Activated T-helper 1 cell treated with anti-CD3 and anti-CD28 coated beads, Interleukin-12 subunit alpha, Interleukin-12 subunit beta, Interleukin-2, Interleukin-4 antibody, amounts not matched to agents 30 ng/mL and 10 ng/mL and 1 ng/mL, durations not matched to agents 14 hours and 24 hours and 36 hours (primary cell): ENCODE measurements at regions of chr2 and their contacts with region 1.

Region 1: GRCh38 chr2:239927424-239927981 is 97.6 kb downstream of the NDUFA10 start:
- DNase-seq: peak; percentile 48
- H3K4me3 Mint-ChIP-seq: peak overlapping the region; percentile 53
- H3K27ac Mint-ChIP-seq: peak overlapping the region; percentile 61
- H3K4me1 Mint-ChIP-seq: peaks cover 38% of the 10 kb centered on the region
- H3K27me3 Mint-ChIP-seq: peaks cover 11% of the 10 kb centered on the region

Region 2: DNA sequence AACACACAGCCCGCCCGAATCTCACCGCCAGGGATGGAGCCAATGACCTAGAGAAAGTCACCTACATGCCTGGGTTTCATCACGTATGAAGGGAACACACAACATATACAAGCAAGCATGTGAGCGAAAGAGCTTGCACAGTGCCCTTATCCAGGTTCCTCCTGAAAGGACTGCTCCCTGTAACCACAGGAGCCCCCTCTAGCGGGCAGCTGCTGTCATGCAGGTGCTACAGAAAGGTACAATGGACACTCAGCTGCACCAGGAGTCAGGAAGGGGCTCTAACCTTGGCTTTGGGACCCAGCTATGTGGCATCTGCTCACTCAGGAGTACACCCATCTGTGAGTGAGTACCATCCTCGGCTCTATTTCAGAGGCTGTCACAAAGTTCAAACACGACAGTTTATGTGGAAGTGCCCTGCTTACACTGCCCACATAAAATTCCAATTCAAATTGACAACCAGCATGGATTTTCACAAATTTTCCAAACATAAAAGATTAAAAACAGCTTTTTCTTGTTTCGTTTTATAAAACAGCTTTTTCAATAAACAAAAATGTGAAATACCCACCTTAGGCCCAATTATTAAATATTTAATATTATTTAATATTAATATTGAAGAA is 94.1 kb after region 1 on chr2:
- intact Hi-C with region 1: loop called (anchors 10 kb)
- DNase-seq: peak; percentile 48
- H3K4me3 Mint-ChIP-seq: no peak overlapping the region
- H3K27ac Mint-ChIP-seq: no peak overlapping the region
- H3K4me1 Mint-ChIP-seq: peaks cover 21% of the 10 kb centered on the region
- H3K27me3 Mint-ChIP-seq: no peaks in the 10 kb centered on the region